HepG2 (cell line): ENCODE measurements at regions of chr6 and their contacts with region 1.

Region 1: GRCh38 chr6:19303383-19303782 is 533.8 kb upstream of the ID4 start:
- DNase-seq: no peak
- ATAC-seq: no peak
- H3K4me3 ChIP-seq: no peak overlapping the region
- H3K27ac ChIP-seq: no peak overlapping the region
- H3K4me1 ChIP-seq: no peaks in the 10 kb centered on the region
- H3K27me3 ChIP-seq: no peaks in the 10 kb centered on the region
- CTCF ChIP-seq: no peak
- EP300 ChIP-seq: no peak
- POLR2A ChIP-seq: no peak
- RAD21 ChIP-seq: no peak

Region 2: DNA sequence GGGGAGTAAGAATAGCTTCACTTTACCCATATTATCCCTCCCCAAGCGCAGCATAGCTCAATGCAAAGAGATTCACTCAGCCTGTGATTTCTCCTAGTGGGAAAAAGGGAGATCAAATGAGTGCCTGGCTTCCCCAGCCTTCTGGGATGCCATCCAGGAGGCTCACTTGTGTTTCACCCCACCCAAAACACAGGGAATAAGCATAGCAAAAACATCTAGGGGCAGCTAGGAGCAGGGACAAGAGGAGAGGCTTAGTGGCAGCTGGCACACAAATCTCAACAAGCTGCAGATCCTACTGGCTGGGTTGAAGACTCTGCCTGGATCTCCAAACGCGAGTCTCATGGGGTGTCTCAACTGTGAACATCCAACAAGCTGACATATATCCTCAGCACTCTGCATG is 200.4 kb before region 1 on chr6:
- CTCF ChIA-PET with region 1: no interaction called
- POLR2A ChIA-PET with region 1: no interaction called
- in situ Hi-C with region 1: no loop called
- intact Hi-C with region 1: loop called (anchors 10 kb)
- DNase-seq: no peak
- ATAC-seq: no peak
- H3K4me3 ChIP-seq: no peak overlapping the region
- H3K27ac ChIP-seq: no peak overlapping the region
- H3K4me1 ChIP-seq: no peaks in the 10 kb centered on the region
- H3K27me3 ChIP-seq: no peaks in the 10 kb centered on the region
- CTCF ChIP-seq: no peak
- EP300 ChIP-seq: no peak
- POLR2A ChIP-seq: no peak
- RAD21 ChIP-seq: no peak

Region 3: DNA sequence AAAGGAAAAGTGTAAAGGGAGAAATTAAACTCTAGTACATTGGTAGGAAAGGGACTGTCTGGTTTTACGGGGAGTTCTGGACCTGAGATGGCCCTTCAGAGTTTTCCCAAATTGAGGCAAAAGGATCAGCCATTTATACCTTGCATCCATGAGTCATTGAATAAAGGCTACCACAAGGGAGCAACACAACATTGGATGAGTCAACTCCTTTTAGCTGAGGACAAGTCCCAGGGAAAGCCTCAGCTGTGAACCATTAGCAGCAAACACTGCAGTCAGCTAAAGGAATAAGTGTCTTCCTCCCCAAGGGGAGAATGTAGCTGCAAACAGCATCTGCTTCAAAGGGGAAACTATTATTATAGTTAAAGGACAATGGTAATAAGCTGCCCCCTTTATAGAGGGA is 65.1 kb after region 1 on chr6:
- CTCF ChIA-PET with region 1: no interaction called
- POLR2A ChIA-PET with region 1: no interaction called
- in situ Hi-C with region 1: no loop called
- intact Hi-C with region 1: no loop called
- DNase-seq: no peak
- ATAC-seq: no peak
- H3K4me3 ChIP-seq: no peak overlapping the region
- H3K27ac ChIP-seq: no peak overlapping the region
- H3K4me1 ChIP-seq: no peaks in the 10 kb centered on the region
- H3K27me3 ChIP-seq: no peaks in the 10 kb centered on the region
- CTCF ChIP-seq: no peak
- EP300 ChIP-seq: no peak
- POLR2A ChIP-seq: no peak
- RAD21 ChIP-seq: no peak

Region 4: GRCh38 chr6:20266851-20267608 is 963.6 kb after region 1 on chr6:
- CTCF ChIA-PET with region 1: no interaction called
- POLR2A ChIA-PET with region 1: no interaction called
- in situ Hi-C with region 1: no loop called
- intact Hi-C with region 1: loop called (anchors 10 kb)
- DNase-seq: no peak
- ATAC-seq: no peak
- H3K4me3 ChIP-seq: no peak overlapping the region
- H3K27ac ChIP-seq: no peak overlapping the region
- H3K4me1 ChIP-seq: no peaks in the 10 kb centered on the region
- H3K27me3 ChIP-seq: no peaks in the 10 kb centered on the region; a peak in 1 of 5 replicates
- CTCF ChIP-seq: no peak
- EP300 ChIP-seq: no peak
- POLR2A ChIP-seq: no peak
- RAD21 ChIP-seq: no peak